Right ventricle myocardium inferior (tissue), 1 donor: ENCODE measurements at regions of chr2 and their contacts with region 1.

Region 1: GRCh38 chr2:41869542-41870264 is 178.1 kb upstream of the PKDCC start:
- DNase-seq: peak; percentile 74
- ATAC-seq: peak; percentile 79

Region 2: GRCh38 chr2:41840702-41841551 is 28.8 kb before region 1 on chr2:
- intact Hi-C with region 1: no loop called
- DNase-seq: peak; percentile 94
- ATAC-seq: peak; percentile 99

Region 3: DNA sequence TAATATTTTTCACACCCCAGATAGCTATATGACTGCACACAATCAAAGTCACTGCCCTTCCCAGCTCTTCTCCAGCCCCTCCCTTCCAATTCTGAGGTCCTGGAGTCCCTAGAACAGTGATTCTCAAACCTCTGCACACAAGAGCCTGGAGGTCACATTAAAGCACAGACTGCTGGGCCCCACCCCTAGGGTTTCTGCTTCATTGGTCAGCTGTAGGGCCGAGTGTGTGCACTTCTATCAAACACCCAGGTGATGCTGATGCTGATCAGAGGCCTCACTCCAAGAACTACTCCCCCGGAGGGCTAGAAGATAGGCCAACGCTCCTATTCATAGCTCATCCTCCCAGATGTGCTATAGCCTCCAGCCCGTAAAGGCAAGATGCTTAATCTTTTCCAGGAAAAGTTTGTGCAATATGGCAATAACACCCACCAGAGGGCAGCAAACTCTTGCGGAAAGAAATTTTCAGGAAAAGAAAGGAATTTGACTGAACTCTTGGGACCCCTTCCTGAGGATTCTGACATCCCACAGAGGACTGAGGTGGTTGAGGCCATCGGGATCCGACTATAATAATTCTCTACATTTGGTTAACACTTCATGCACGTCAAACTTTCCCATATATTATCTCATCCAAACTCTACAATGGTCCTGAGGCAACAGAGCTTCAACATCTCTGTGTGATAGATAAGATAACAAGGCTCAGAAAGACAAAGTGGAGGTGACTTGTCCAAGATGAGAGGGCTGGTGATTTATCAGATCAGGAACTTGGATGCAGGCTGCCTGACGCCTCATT is 16.1 kb before region 1 on chr2:
- intact Hi-C with region 1: loop called (anchors 2 kb)
- DNase-seq: no peak
- ATAC-seq: no peak

Region 4: GRCh38 chr2:41933585-41934320 is 64.0 kb after region 1 on chr2:
- intact Hi-C with region 1: loop called (anchors 5 kb)
- DNase-seq: no peak
- ATAC-seq: peak; percentile 43

Region 5: DNA sequence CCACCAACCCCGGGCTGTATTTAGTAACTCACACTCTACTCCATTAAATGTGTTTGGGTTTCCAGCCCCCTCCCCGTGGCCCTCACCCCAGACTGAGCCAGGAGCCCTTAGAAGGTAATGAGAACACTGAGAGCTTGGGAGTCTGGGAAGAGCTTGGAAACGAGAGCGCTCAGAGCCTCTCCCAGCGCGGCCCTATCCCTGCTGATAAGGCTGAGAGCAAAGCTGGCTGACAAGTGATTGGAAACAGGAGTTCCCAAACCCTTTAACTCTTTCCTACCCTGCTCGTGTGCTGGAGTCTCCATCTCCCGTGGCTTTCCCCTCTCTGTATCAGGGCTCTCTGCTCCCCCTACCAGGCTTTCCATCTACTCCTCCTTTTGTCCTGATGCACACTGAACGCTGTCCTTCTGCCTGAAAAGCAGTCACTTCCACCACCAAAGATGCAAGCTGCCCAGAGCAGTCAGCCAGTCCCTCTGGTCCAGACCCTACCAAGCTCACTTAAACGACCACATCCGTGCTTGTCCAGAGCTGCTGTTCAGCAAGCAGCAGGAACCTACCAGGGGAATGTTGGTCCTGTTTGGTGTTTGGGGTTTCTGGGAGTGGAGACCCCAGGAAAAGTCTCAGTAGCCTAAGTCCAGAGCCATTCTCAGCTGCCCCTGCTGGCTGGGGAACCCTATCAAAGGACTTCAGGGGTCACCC is 78.1 kb after region 1 on chr2:
- intact Hi-C with region 1: loop called (anchors 5 kb)
- DNase-seq: peak; percentile 83
- ATAC-seq: peak; percentile 93

Region 6: GRCh38 chr2:42086500-42086953 is 216.8 kb after region 1 on chr2:
- intact Hi-C with region 1: loop called (anchors 1 kb)
- DNase-seq: no peak
- ATAC-seq: peak; percentile 53

Region 7: DNA sequence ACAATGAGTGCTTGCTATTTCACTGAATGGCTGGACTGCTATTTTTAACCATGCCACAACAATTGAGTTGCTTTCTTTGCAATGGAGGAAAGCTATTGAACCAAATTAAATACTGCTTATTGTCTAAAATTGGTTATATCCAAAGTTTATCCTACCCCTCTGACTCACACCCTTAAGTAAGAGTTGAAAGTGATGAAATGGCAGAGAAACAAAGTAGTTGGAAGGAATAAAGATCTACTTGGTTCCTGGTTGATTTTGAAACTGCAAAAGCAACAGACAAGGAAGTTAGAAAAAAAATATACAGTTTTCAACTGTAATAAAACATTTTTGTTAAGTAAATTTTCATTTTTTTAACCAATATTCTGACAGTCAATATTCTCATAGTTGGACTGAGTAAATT is 347.0 kb after region 1 on chr2:
- intact Hi-C with region 1: no loop called
- DNase-seq: no peak
- ATAC-seq: no peak

Region 8: DNA sequence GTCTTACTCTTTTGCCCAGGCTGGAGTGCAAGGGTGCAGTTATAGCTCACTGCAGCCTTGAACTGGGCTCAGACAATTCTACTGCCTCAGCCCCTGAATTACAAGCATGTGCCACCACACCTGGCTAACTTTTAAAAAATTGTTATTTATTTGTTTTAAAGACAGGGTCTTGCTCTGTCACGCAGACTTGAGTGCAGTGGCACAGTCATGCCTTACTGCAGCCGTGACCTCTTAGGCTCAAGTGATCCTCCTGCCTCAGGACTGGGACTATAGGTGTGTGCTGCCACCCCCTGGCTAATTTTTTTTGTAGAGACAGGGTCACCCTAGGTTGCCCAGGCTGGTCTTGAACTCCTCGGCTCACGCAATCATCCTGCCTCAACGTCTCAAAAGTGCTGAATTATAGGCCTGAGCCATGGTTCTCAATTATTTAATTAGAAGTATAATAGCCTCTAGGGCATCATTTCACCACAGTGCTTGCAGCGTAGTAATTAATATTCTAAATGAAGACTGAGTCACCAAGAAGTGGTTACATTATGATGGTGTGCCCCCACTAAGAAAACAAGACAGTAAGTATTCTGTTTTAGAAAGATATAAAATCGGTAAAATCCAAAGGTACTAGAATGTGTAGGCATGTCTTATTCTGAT is 369.1 kb after region 1 on chr2:
- intact Hi-C with region 1: loop called (anchors 10 kb)
- DNase-seq: peak; percentile 60
- ATAC-seq: peak; percentile 89